IMR-90 (cell line): ENCODE measurements at regions of chr5 and their contacts with region 1.

Region 1: GRCh38 chr5:94849821-94850736 is 231.6 kb downstream of the SLF1 start:
- DNase-seq: peak; percentile 66
- ATAC-seq: peak; percentile 96
- H3K4me3 ChIP-seq: no peak overlapping the region
- H3K27ac ChIP-seq: no peak overlapping the region
- H3K4me1 ChIP-seq: no peaks in the 10 kb centered on the region
- H3K27me3 ChIP-seq: no peaks in the 10 kb centered on the region
- CTCF ChIP-seq: peak; percentile 82
- POLR2A ChIP-seq: no peak
- RAD21 ChIP-seq: peak; percentile 86

Region 2: GRCh38 chr5:93915142-93915553 is 934.9 kb before region 1 on chr5:
- CTCF ChIA-PET with region 1: no interaction called
- POLR2A ChIA-PET with region 1: no interaction called
- dilution Hi-C with region 1: no loop called
- in situ Hi-C with region 1: no loop called
- intact Hi-C with region 1: loop called (anchors 10 kb)
- DNase-seq: peak; percentile 73
- ATAC-seq: peak; percentile 56; the same call in 1 of the 2 replicates
- H3K4me3 ChIP-seq: no peak overlapping the region
- H3K27ac ChIP-seq: no peak overlapping the region
- H3K4me1 ChIP-seq: no peaks in the 10 kb centered on the region
- H3K27me3 ChIP-seq: no peaks in the 10 kb centered on the region
- CTCF ChIP-seq: peak; percentile 69
- POLR2A ChIP-seq: no peak
- RAD21 ChIP-seq: peak; percentile 75

Region 3: DNA sequence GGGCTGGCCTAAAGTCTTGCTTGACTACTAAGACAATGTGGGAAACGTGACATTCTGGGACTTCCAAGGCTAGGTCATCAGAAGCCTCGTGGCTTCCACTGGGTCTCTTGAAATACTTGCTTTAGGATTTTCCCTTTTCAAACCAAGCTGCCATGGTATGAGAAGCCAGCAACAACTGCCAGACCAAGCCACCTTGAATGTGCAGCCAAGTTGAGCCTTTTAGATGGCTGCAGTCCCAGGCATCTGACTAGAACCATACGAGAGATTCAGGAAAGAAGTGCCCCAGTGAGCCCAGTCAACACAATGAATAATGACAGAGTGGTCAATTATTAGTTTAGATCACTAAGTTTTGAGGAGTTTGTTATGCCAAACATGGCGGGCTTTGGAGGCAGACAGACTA is 88.3 kb before region 1 on chr5:
- CTCF ChIA-PET with region 1: no interaction called
- POLR2A ChIA-PET with region 1: no interaction called
- dilution Hi-C with region 1: no loop called
- in situ Hi-C with region 1: no loop called
- intact Hi-C with region 1: no loop called
- DNase-seq: no peak
- ATAC-seq: no peak
- H3K4me3 ChIP-seq: no peak overlapping the region
- H3K27ac ChIP-seq: no peak overlapping the region
- H3K4me1 ChIP-seq: no peaks in the 10 kb centered on the region
- H3K27me3 ChIP-seq: no peaks in the 10 kb centered on the region; the same call in 1 of the 2 replicates
- CTCF ChIP-seq: no peak
- POLR2A ChIP-seq: no peak
- RAD21 ChIP-seq: no peak

Region 4: GRCh38 chr5:95007901-95008597 is 158.0 kb after region 1 on chr5:
- CTCF ChIA-PET with region 1: no interaction called
- POLR2A ChIA-PET with region 1: no interaction called
- dilution Hi-C with region 1: no loop called
- in situ Hi-C with region 1: no loop called
- intact Hi-C with region 1: no loop called
- DNase-seq: no peak
- ATAC-seq: no peak
- H3K4me3 ChIP-seq: no peak overlapping the region
- H3K27ac ChIP-seq: no peak overlapping the region
- H3K4me1 ChIP-seq: no peaks in the 10 kb centered on the region
- H3K27me3 ChIP-seq: no peaks in the 10 kb centered on the region
- CTCF ChIP-seq: no peak
- POLR2A ChIP-seq: no peak
- RAD21 ChIP-seq: no peak

Region 5: GRCh38 chr5:95027151-95027721 is 177.2 kb after region 1 on chr5:
- CTCF ChIA-PET with region 1: no interaction called
- POLR2A ChIA-PET with region 1: no interaction called
- dilution Hi-C with region 1: no loop called
- in situ Hi-C with region 1: no loop called
- intact Hi-C with region 1: no loop called
- DNase-seq: no peak
- ATAC-seq: no peak
- H3K4me3 ChIP-seq: no peak overlapping the region
- H3K27ac ChIP-seq: no peak overlapping the region
- H3K4me1 ChIP-seq: no peaks in the 10 kb centered on the region
- H3K27me3 ChIP-seq: no peaks in the 10 kb centered on the region
- CTCF ChIP-seq: no peak
- POLR2A ChIP-seq: no peak
- RAD21 ChIP-seq: no peak

Region 6: GRCh38 chr5:95565280-95565920 is 715.3 kb after region 1 on chr5:
- CTCF ChIA-PET with region 1: no interaction called
- POLR2A ChIA-PET with region 1: no interaction called
- dilution Hi-C with region 1: no loop called
- in situ Hi-C with region 1: no loop called
- intact Hi-C with region 1: no loop called
- DNase-seq: peak; percentile 52
- ATAC-seq: peak; percentile 94
- H3K4me3 ChIP-seq: no peak overlapping the region
- H3K27ac ChIP-seq: peak overlapping the region; percentile 71; the same call in 1 of the 2 replicates
- H3K4me1 ChIP-seq: peaks cover 6% of the 10 kb centered on the region; the same call in 1 of the 2 replicates
- H3K27me3 ChIP-seq: no peaks in the 10 kb centered on the region
- CTCF ChIP-seq: no peak
- POLR2A ChIP-seq: no peak
- RAD21 ChIP-seq: no peak